ENCODE measurements at regions of chr17 and their contacts with region 1.

Region 1: GRCh38 chr17:65008882-65009281 is 47.7 kb downstream of the GNA13 start:
- DNase-seq: no peak

Region 2: DNA sequence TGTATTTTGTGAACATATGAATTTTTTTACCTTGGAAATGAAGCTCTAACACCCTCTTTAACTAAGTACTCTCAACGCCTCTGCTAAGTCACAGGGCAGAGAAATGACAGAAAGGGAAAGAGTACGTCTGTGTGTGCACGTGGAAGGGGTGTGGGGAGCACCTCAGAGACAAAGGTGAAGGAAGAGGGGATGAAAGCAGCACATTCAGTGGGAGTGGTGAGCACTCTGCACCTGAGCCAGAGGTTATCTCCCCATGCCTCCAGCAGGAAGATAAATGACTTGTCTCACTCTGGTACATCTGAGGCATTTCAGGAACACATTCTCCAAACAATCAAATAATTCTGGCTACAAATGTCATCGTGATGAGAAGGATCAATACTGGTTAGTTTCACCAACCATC is 32.6 kb after region 1 on chr17:
- intact Hi-C with region 1: loop called in 1 of 2 experiments (anchors 1 kb)
- DNase-seq: no peak

Region 3: GRCh38 chr17:65531263-65532100 is 522.6 kb after region 1 on chr17:
- intact Hi-C with region 1: no loop called
- DNase-seq: peak; percentile 89

Measured in posterior vena cava (tissue), 2 donors.